ENCODE measurements at regions of chr7 and their contacts with region 1.

Region 1: GRCh38 chr7:149261829-149262617 is at the start of gene ZNF783:
- DNase-seq: peak; percentile 88
- ATAC-seq: peak; percentile 91
- H3K4me3 Mint-ChIP-seq: peak within 1 kb of the TSS; percentile 76
- H3K27ac Mint-ChIP-seq: peak within 1 kb of the TSS; percentile 82
- H3K4me1 Mint-ChIP-seq: peaks cover 16% of the 10 kb centered on the region
- H3K27me3 Mint-ChIP-seq: no peaks in the 10 kb centered on the region
- total RNA-seq, gene ZNF783: 12.7 to 12.9 TPM

Region 2: DNA sequence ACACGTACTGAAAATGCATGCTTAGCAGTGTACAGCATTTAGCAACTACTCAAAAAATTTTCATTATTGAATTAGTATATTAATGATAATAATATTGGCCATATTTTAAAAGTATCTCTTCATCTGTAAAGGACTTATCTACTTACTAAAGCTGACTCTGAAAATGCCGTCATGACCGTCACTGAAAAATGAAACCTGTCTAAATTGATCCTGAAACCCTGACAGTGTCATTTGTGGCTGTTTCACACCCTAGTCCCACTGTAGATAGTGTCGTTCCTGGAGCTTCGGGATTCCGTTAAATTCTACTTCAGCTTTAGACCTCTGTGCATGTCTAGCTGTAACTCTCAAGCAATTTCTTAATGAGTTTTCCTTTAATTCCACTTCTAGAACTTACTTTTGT is 342.2 kb before region 1 on chr7:
- CTCF ChIA-PET with region 1: no interaction called
- POLR2A ChIA-PET with region 1: no interaction called
- DNase-seq: no peak
- ATAC-seq: no peak
- H3K4me3 Mint-ChIP-seq: no peak overlapping the region
- H3K27ac Mint-ChIP-seq: no peak overlapping the region
- H3K4me1 Mint-ChIP-seq: peaks cover 45% of the 10 kb centered on the region
- H3K27me3 Mint-ChIP-seq: no peaks in the 10 kb centered on the region

Region 3: GRCh38 chr7:149195180-149196150 is 66.6 kb before region 1 on chr7 and contains the start of gene ZNF282:
- CTCF ChIA-PET with region 1: interaction called, 13 read pairs
- POLR2A ChIA-PET with region 1: no interaction called
- DNase-seq: peak; percentile 81
- ATAC-seq: peak; percentile 92
- H3K4me3 Mint-ChIP-seq: peak within 1 kb of the TSS; percentile 87
- H3K27ac Mint-ChIP-seq: peak within 1 kb of the TSS; percentile 85
- H3K4me1 Mint-ChIP-seq: peaks cover 50% of the 10 kb centered on the region
- H3K27me3 Mint-ChIP-seq: no peaks in the 10 kb centered on the region
- total RNA-seq, gene ZNF282: 28.4 to 30.6 TPM

Region 4: DNA sequence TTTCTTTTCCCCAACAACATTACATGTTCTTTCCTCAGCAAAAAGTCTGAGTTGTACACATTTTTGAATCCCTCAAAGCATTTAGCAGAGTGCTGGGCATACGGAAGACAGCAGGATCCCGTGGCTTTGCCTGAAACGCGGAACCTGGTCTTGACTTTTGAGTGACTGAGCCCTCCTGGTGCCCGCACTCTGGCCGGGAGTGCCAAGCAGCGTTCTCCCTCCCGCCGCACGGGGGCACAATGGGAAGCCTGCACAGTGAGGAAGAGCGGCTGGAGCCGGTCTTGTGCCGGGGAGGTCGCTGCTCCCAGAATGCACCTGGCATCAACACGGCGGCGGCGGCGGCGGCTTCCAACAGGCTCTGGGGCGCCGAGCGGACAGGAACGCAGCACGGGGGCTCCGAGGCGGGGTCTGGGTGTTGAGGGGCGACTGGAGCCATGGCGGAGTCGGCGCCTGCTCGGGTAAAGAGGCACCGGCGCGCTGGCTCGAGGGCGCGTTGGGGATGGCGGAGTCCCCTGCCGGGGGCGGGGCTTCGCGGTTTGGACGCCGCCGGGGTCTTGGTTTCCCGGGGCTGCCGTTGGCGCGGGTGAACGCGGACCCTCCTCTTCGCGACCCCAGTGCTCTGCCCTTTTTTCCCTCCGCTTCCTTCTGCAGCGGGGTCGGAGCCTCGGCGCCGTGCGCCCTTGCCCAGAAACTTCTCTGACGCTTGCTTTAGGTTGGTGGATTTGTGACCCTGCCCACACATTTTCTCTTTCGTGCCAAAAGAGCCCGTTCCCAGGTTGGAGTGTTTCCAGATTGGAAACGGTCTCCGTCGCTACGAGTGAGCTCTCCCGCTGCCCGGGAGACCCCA is 22.5 kb before region 1 on chr7 and contains the start of gene ZNF212:
- CTCF ChIA-PET with region 1: interaction called, 21 read pairs
- POLR2A ChIA-PET with region 1: no interaction called
- DNase-seq: peak; percentile 90
- ATAC-seq: peak; percentile 99
- H3K4me3 Mint-ChIP-seq: peak within 1 kb of the TSS; percentile 92
- H3K27ac Mint-ChIP-seq: peak within 1 kb of the TSS; percentile 84
- H3K4me1 Mint-ChIP-seq: peaks cover 30% of the 10 kb centered on the region
- H3K27me3 Mint-ChIP-seq: no peaks in the 10 kb centered on the region
- total RNA-seq, gene ZNF212: 10.8 to 12.9 TPM

Region 5: GRCh38 chr7:149248777-149249176 is 13.2 kb before region 1 on chr7:
- CTCF ChIA-PET with region 1: interaction called, 22 read pairs
- POLR2A ChIA-PET with region 1: no interaction called
- DNase-seq: no peak
- ATAC-seq: no peak
- H3K4me3 Mint-ChIP-seq: no peak overlapping the region
- H3K27ac Mint-ChIP-seq: no peak overlapping the region
- H3K4me1 Mint-ChIP-seq: peaks cover 30% of the 10 kb centered on the region
- H3K27me3 Mint-ChIP-seq: no peaks in the 10 kb centered on the region

Region 6: DNA sequence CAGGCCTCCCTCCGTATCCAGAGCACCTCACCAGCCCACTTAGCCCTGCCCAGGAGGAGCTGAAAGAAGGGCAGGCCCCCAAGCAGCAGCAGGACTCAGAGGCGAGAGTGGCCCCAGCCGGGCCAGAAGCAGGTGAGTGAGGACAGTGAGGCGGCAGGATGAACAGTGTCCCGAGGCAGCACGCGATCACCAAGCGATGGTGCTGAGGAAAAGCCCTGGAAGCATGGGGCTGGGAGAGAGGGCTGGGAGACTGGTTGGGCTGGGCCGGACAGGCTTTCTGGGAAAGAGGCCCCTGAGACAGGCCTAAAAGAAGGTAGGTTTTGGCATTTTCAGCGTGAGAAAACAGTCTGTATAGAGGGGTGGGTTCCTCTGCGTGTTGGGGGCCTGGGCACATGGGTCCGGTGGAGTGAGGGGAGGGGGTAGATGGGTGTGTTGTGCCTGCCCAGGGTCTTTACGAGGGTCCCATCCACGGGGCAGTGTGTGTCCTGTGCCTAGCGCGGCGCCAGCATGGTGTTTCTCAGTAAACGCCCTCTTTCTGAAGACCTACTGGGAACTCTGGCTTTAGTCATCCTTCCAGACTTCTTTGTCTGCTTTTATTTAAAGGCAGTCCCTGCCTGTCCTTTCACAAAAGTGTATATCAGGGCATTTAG is 16.5 kb after region 1 on chr7:
- CTCF ChIA-PET with region 1: interaction called, 44 read pairs
- POLR2A ChIA-PET with region 1: no interaction called
- DNase-seq: no peak
- ATAC-seq: no peak
- H3K4me3 Mint-ChIP-seq: no peak overlapping the region
- H3K27ac Mint-ChIP-seq: no peak overlapping the region
- H3K4me1 Mint-ChIP-seq: no peaks in the 10 kb centered on the region
- H3K27me3 Mint-ChIP-seq: no peaks in the 10 kb centered on the region

Region 7: DNA sequence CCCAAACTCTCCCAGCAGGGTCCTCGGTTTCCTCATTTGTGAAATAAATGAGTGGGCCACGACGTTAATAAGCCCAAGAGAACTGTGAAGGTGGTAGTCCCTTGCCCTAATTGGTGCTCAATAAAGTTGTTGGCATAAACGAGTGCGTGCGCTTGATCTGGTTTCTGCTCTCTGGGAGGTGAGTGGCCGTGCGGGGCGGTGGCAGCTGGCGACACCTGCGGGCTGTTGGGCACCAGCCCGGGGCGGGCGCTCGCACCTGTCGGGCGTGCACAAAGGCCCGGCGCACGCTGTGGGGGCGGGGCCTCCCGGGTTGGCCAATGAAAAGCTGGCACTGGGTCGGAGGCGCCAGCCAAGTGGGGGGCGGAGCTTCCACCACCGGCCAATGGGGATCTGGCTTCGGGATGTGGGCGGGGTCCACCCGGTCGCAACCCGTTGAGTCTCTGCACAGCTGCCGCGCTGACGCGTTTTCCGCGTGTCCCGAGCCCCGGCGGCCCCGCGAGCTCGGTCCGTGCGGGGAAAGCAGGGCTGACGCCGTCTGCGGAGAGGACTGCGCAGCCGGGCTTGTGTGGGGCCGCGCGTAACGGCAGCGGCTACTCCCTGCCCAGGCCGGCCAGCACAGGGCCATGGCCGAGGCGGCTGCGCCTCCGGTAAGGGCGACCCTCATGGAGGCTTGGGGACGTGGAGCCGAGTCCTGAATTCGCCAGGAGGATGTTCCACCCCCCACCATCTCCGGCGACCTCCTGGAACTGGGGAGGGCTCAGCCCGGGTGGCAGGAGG is 23.0 kb after region 1 on chr7:
- CTCF ChIA-PET with region 1: interaction called, 44 read pairs
- POLR2A ChIA-PET with region 1: interaction called, 6 read pairs
- DNase-seq: peak; percentile 98
- ATAC-seq: peak; percentile 97
- H3K4me3 Mint-ChIP-seq: peak overlapping the region; percentile 74
- H3K27ac Mint-ChIP-seq: peak overlapping the region; percentile 73
- H3K4me1 Mint-ChIP-seq: peaks cover 38% of the 10 kb centered on the region
- H3K27me3 Mint-ChIP-seq: no peaks in the 10 kb centered on the region

Region 8: DNA sequence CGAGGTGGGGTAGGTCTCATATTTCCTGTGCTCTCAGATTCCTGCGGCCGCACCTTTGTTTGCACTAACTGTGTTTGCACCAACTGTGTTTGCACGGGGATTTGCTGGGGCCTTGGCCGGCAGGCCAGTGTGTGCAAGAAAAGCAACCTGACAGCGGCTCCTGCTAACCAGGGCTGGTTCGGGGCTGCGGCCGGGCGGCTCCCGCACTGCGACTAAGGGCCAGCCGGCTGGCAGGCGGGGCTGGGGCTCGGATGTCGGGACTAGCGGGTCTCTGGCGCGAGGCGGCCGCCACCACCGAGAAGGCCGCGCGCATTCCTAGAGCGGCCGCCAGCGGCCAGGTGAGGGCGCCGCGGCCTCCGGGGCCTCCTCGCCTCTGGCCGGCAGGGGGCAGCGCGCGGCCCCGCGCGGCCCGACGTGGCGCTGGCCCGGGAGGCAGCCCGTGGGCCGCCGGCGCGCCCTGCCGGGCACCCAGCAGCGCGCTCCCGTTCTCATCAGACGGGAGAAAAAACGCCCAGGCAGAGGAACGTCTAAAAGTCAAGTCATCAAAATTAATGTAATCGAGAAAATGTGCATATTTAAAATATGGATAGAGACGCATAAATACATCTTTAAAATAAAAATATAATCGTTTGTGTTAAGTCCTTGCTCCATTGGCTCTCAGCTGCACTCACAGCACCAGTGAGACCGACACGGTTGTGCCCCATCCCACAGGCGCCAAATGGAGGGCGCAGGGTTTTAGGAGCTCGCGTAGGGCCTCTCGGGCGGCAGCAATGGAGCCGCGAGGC is 160.3 kb after region 1 on chr7:
- CTCF ChIA-PET with region 1: interaction called, 10 read pairs
- POLR2A ChIA-PET with region 1: no interaction called
- DNase-seq: peak; percentile 72
- ATAC-seq: peak; percentile 99
- H3K4me3 Mint-ChIP-seq: peak overlapping the region; percentile 71
- H3K27ac Mint-ChIP-seq: peak overlapping the region; percentile 52
- H3K4me1 Mint-ChIP-seq: peaks cover 9% of the 10 kb centered on the region
- H3K27me3 Mint-ChIP-seq: peaks cover 3% of the 10 kb centered on the region